Activated B cell treated with CpG ODN at 0.5 μM for 24 hours (primary cell): ENCODE measurements at regions of chr20 and their contacts with region 1.

Region 1: GRCh38 chr20:25390538-25391528 is at the start of gene ABHD12:
- DNase-seq: peak; percentile 85
- ATAC-seq: peak; percentile 93
- H3K4me3 Mint-ChIP-seq: peak within 1 kb of the TSS; percentile 85
- H3K27ac Mint-ChIP-seq: peak within 1 kb of the TSS; percentile 76
- H3K4me1 Mint-ChIP-seq: peaks cover 17% of the 10 kb centered on the region
- H3K27me3 Mint-ChIP-seq: no peaks in the 10 kb centered on the region
- CTCF ChIP-seq: no peak
- total RNA-seq, gene ABHD12: 16.1 and 16.3 TPM in 2 replicates

Region 2: DNA sequence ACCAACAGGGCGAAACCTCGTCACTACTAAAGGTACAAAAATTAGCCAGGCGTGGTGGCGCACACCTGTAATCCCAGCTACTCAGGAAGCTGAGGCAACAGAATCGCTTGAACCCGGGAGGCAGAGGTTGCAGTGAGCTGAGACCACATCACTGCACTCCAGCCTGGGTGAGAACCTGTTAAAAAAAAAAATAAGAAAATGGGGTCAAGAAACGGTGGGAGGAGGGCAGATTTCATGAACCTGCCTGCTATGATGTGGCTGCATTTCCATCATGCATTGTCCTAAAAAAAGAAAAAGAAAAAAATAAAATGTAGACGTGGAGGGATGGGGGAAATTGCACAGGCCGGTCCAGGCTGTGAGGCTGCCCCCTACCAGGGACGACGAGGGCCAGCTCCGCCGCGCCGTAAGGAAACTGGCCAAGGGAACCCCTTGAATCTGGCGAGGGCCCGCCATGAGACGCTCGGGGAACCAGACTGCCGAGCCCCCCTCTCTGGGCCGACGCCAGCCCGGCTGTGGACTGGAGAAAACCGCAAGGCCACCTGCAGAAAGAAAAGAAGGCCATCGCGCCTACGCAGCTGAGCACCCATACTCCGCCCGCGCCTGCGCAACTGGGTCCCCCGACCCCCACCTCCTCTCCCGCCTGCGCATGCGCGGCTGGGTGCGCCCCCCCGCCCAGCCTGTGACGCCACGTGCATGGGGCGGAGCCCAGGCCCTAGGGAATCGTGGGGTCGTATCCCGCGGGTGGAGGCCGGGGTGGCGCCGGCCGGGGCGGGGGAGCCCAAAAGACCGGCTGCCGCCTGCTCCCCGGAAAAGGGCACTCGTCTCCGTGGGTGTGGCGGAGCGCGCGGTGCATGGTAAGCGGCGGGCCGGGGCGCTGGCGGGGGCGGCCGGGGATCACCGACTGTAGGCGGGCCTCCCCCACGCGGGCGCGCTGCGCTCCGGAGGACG is 195.5 kb before region 1 on chr20 and contains the start of gene ENTPD6:
- CTCF ChIA-PET with region 1: no interaction called
- POLR2A ChIA-PET with region 1: interaction called, 6 read pairs
- intact Hi-C with region 1: loop called (anchors 1 kb)
- DNase-seq: peak; percentile 99
- ATAC-seq: peak; percentile 82
- H3K4me3 Mint-ChIP-seq: peak within 1 kb of the TSS; percentile 90
- H3K27ac Mint-ChIP-seq: peak within 1 kb of the TSS; percentile 86
- H3K4me1 Mint-ChIP-seq: peaks cover 20% of the 10 kb centered on the region
- H3K27me3 Mint-ChIP-seq: no peaks in the 10 kb centered on the region
- CTCF ChIP-seq: no peak
- total RNA-seq, gene ENTPD6: 37.2 and 44.4 TPM in 2 replicates

Region 3: GRCh38 chr20:25294459-25295385 is 96.1 kb before region 1 on chr20:
- CTCF ChIA-PET with region 1: interaction called, 3 read pairs
- POLR2A ChIA-PET with region 1: no interaction called
- intact Hi-C with region 1: loop called (anchors 2 kb)
- DNase-seq: peak; percentile 54
- ATAC-seq: peak; percentile 92
- H3K4me3 Mint-ChIP-seq: no peak overlapping the region
- H3K27ac Mint-ChIP-seq: no peak overlapping the region
- H3K4me1 Mint-ChIP-seq: peaks cover 5% of the 10 kb centered on the region
- H3K27me3 Mint-ChIP-seq: no peaks in the 10 kb centered on the region
- CTCF ChIP-seq: no peak

Region 4: GRCh38 chr20:25318471-25319240 is 72.2 kb before region 1 on chr20:
- CTCF ChIA-PET with region 1: no interaction called
- POLR2A ChIA-PET with region 1: interaction called, 6 read pairs
- intact Hi-C with region 1: loop called (anchors 1 kb)
- DNase-seq: peak; percentile 24
- ATAC-seq: peak; percentile 93
- H3K4me3 Mint-ChIP-seq: peak overlapping the region; percentile 52
- H3K27ac Mint-ChIP-seq: peak overlapping the region; percentile 87
- H3K4me1 Mint-ChIP-seq: peaks cover 39% of the 10 kb centered on the region
- H3K27me3 Mint-ChIP-seq: no peaks in the 10 kb centered on the region
- CTCF ChIP-seq: no peak